ENCODE measurements at regions of chr2 and their contacts with region 1.

Region 1: GRCh38 chr2:26846328-26847306 is 1.3 kb upstream of the DPYSL5 start:
- DNase-seq: peak; percentile 42 to 72
- H3K4me3 ChIP-seq: no peak overlapping the region
- H3K27ac ChIP-seq: no peak overlapping the region
- H3K4me1 ChIP-seq: peaks cover 0 to 41% (median 35%) of the 10 kb centered on the region in 4 donors
- H3K27me3 ChIP-seq: peaks cover 7 to 90% of the 10 kb centered on the region in 2 donors
- CTCF ChIP-seq: peak; percentile 63 to 68

Region 2: DNA sequence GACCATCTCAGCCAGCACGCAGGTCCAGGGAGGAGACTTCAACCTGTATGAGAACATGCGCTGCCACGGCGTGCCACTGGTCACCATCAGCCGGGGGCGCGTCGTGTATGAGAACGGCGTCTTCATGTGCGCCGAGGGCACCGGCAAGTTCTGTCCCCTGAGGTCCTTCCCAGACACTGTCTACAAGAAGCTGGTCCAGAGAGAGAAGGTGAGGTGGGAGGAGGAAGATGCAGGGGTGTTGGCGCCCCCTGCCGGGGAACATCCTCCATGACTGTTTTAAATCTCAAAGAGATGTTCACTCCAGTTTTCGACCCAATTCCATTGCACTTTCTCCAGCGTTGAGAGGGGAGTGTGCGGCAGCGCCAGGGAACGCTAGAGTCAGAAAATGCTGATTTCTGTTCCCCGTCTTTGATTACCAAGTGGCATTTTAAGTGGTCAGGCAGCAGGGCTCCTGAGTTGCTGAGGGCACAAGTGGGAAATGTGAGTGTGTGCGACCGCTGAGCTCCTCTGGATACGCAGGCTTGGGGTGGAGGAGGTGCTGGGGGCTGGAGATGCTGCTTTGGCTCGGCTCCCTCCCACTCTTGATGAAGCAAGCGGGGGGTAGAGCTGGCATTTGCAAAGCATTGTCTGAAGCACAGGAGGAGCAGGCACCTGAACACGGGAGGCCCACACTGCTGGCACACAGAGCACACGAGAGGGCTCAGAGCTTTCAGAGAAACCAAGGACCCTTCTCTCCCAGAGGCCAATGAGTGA is 96.1 kb after region 1 on chr2:
- intact Hi-C with region 1: loop called (anchors 5 kb)
- DNase-seq: peak in 1 of 2 donors; percentile 52
- H3K4me3 ChIP-seq: no peak overlapping the region
- H3K27ac ChIP-seq: no peak overlapping the region
- H3K4me1 ChIP-seq: peaks cover 0 to 4% (median 0%) of the 10 kb centered on the region in 4 donors
- H3K27me3 ChIP-seq: peaks cover 0 to 52% of the 10 kb centered on the region in 2 donors
- CTCF ChIP-seq: peak; percentile 60 to 68

Measured in tibial artery (tissue), 4 donors.